Pancreas (tissue), 10 donors: ENCODE measurements at regions of chr6 and their contacts with region 1.

Region 1: GRCh38 chr6:2783188-2783963 is 18.2 kb downstream of the WRNIP1 start:
- DNase-seq: no peak
- ATAC-seq: peak in 3 of 4 donors; percentile 25 to 64 (median 46)
- H3K4me3 ChIP-seq: no peak overlapping the region
- H3K27ac ChIP-seq: no peak overlapping the region
- H3K4me1 ChIP-seq: peaks cover 0 to 3% (median 0%) of the 10 kb centered on the region in 3 donors
- H3K27me3 ChIP-seq: no peaks in the 10 kb centered on the region
- CTCF ChIP-seq: no peak

Region 2: DNA sequence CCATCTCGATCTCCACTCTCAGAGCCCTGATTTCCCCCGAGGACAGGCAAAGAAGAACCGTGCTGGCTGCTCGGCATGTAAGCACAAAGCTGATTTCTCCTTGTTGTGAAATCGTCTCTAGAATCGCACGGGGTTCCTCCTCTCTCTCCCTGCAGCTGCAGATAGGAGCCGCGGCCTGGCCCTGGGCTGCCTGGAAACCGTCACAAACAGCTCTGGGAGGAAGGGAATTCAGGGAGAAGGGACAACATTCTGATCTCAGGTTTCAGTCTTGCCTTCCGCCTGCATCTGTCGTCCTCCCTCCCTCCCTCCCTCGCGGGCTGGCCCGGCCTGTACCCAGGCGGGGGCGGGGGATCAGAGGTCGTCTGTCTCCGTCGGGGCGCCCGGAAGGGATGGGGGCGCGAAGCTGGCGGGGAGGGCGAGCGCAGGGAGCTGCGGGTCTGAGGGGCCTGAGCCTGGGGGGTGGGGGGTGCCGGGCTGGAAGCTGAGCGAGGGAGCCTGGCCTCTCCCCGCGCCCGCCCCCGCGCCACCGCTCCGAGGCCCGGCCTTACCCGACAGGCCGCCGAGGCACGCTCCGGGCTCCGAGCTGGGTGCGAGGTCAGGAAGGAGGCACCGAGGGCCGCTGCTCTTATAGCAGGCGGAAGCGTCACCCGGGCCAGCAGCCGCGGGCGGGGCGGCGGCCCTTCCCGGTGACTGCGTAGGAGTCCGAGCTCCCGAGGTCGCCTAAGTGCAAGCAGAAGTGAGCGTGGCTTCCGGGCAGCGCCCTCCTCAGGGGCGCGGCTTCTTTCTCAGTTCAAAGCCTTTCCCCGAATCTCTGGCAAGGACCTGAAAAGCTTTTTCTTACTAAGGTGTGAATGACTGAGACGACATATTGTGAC is 58.1 kb after region 1 on chr6 and contains the start of gene SERPINB1:
- intact Hi-C with region 1: loop called in 1 of 3 experiments (anchors 5 kb)
- DNase-seq: peak; percentile 91 to 96 (median 94)
- ATAC-seq: peak; percentile 76 to 86 (median 84)
- H3K4me3 ChIP-seq: peak within 1 kb of the TSS; percentile 33 to 61 (median 42)
- H3K27ac ChIP-seq: peak within 1 kb of the TSS; percentile 96 to 98 (median 96)
- H3K4me1 ChIP-seq: peaks cover 0 to 33% (median 31%) of the 10 kb centered on the region in 3 donors
- H3K27me3 ChIP-seq: no peaks in the 10 kb centered on the region
- CTCF ChIP-seq: no peak
- total RNA-seq, gene SERPINB1: 94.1 to 285 (median 190) TPM

Region 3: DNA sequence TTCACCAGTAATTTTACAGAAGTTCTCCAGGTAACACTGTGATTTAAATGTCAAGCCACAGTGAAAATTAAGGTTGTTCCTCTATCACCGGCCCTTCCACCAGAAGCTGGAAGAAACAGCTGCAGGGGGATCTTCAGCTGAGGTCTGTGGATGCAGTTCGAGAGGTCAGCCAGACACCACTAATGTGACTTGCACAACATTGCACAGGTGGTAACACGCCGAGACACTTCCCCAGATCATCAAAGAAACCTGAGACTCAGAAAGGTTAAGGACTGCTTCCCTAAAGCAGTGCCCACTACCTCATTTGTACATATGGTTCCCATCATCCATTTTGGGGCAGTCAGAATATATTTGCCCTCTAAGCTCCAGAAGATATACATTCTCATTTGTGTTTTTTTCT is 127.8 kb after region 1 on chr6:
- intact Hi-C with region 1: loop called in 1 of 3 experiments (anchors 10 kb)
- DNase-seq: no peak
- ATAC-seq: no peak
- H3K4me3 ChIP-seq: no peak overlapping the region
- H3K27ac ChIP-seq: no peak overlapping the region
- H3K4me1 ChIP-seq: no peaks in the 10 kb centered on the region
- H3K27me3 ChIP-seq: no peaks in the 10 kb centered on the region
- CTCF ChIP-seq: no peak

Region 4: GRCh38 chr6:2931970-2932748 is 148.8 kb after region 1 on chr6:
- intact Hi-C with region 1: loop called in 1 of 3 experiments (anchors 10 kb)
- DNase-seq: peak; percentile 72 to 86 (median 78)
- ATAC-seq: peak; percentile 95 to 100 (median 99)
- H3K4me3 ChIP-seq: peak overlapping the region in 1 of 4 donors; percentile 22
- H3K27ac ChIP-seq: no peak overlapping the region
- H3K4me1 ChIP-seq: peaks cover 0 to 3% (median 0%) of the 10 kb centered on the region in 3 donors
- H3K27me3 ChIP-seq: no peaks in the 10 kb centered on the region
- CTCF ChIP-seq: peak; percentile 90 to 94 (median 92)